IMR-90 (cell line): ENCODE measurements at regions of chr9 and their contacts with region 1.

Region 1: DNA sequence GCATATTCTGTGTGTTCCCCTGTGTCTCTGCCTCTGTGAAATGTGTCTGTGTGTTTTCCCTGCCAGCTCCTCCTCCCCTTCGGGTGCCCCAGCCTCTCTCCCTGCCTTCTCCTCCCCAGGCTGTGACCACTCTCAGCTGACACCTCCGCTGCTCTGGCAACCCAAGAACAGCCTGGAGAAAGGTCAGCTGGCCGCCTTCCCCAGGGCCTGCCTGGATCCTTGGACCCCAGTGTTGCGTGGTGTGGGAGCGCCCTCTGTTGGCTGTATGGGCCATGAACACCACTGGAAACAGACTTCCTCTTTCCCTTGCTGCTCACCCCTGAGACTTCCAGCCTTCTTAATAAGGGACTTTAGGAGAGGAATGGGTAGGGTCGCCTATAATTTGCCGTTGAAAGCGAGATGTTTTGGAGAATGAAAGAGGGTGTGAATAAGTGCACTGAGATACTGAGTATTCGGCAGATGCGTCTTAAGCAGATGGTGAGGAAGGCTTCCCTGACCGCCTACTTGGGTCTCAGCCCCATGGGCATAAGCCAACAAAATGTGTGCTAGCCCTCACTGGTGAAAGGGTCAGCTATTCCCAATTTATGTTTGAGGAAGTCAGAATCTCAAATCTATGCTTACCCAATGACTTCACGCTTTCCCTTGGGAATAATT is 114.9 kb upstream of the TRIM32 start:
- DNase-seq: peak; percentile 84
- ATAC-seq: peak; percentile 95
- H3K4me3 ChIP-seq: no peak overlapping the region
- H3K27ac ChIP-seq: no peak overlapping the region
- H3K4me1 ChIP-seq: peaks cover 5% of the 10 kb centered on the region; the same call in 1 of the 2 replicates
- H3K27me3 ChIP-seq: no peaks in the 10 kb centered on the region
- CTCF ChIP-seq: peak; percentile 94
- POLR2A ChIP-seq: peak; percentile 59; the same call in 1 of the 2 replicates
- RAD21 ChIP-seq: peak; percentile 99

Region 2: GRCh38 chr9:116365056-116365471 is 207.2 kb before region 1 on chr9:
- CTCF ChIA-PET with region 1: no interaction called
- POLR2A ChIA-PET with region 1: interaction called, 4 read pairs
- dilution Hi-C with region 1: no loop called
- in situ Hi-C with region 1: no loop called
- intact Hi-C with region 1: loop called (anchors 5 kb)
- DNase-seq: peak; percentile 78
- ATAC-seq: peak; percentile 84
- H3K4me3 ChIP-seq: no peak overlapping the region
- H3K27ac ChIP-seq: peak overlapping the region; percentile 9; the same call in 1 of the 2 replicates
- H3K4me1 ChIP-seq: peaks cover 10% of the 10 kb centered on the region
- H3K27me3 ChIP-seq: no peaks in the 10 kb centered on the region
- CTCF ChIP-seq: 0 out of 2 replicates have a peak, but pooled peaks have one; percentile 11
- POLR2A ChIP-seq: no peak
- RAD21 ChIP-seq: peak; percentile 28

Region 3: GRCh38 chr9:116377479-116377779 is 194.8 kb before region 1 on chr9:
- CTCF ChIA-PET with region 1: interaction called, 4 read pairs
- POLR2A ChIA-PET with region 1: no interaction called
- dilution Hi-C with region 1: no loop called
- in situ Hi-C with region 1: no loop called
- intact Hi-C with region 1: loop called (anchors 5 kb)
- DNase-seq: peak; percentile 75
- ATAC-seq: peak; percentile 86
- H3K4me3 ChIP-seq: no peak overlapping the region
- H3K27ac ChIP-seq: 0 out of 2 replicates have a peak overlapping the region, but pooled peaks have one; percentile 4
- H3K4me1 ChIP-seq: peaks cover 17% of the 10 kb centered on the region
- H3K27me3 ChIP-seq: no peaks in the 10 kb centered on the region
- CTCF ChIP-seq: no peak
- POLR2A ChIP-seq: no peak
- RAD21 ChIP-seq: no peak

Region 4: DNA sequence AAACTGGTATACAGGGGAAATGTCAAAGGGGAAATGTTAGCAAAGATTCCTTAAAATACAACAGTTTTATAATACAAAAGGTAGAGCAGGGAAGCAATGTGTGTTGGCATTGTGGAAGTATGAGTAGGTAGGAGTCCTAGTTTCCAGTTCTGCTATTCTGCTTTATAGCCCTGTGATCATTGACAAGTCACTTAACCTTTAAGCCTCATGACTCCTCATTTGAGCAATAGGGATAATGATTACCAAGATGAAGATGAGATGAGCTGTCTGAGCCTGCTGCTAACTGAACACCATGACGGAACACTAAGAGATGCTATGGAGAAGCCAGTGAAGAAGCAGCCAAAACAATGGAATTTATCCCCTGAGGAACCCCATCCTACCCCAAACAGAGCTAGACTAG is 166.9 kb before region 1 on chr9:
- CTCF ChIA-PET with region 1: no interaction called
- POLR2A ChIA-PET with region 1: no interaction called
- dilution Hi-C with region 1: no loop called
- in situ Hi-C with region 1: no loop called
- intact Hi-C with region 1: loop called (anchors 2 kb)
- DNase-seq: no peak
- ATAC-seq: no peak
- H3K4me3 ChIP-seq: no peak overlapping the region
- H3K27ac ChIP-seq: no peak overlapping the region
- H3K4me1 ChIP-seq: no peaks in the 10 kb centered on the region
- H3K27me3 ChIP-seq: no peaks in the 10 kb centered on the region; the same call in 1 of the 2 replicates
- CTCF ChIP-seq: no peak
- POLR2A ChIP-seq: no peak
- RAD21 ChIP-seq: no peak

Region 5: DNA sequence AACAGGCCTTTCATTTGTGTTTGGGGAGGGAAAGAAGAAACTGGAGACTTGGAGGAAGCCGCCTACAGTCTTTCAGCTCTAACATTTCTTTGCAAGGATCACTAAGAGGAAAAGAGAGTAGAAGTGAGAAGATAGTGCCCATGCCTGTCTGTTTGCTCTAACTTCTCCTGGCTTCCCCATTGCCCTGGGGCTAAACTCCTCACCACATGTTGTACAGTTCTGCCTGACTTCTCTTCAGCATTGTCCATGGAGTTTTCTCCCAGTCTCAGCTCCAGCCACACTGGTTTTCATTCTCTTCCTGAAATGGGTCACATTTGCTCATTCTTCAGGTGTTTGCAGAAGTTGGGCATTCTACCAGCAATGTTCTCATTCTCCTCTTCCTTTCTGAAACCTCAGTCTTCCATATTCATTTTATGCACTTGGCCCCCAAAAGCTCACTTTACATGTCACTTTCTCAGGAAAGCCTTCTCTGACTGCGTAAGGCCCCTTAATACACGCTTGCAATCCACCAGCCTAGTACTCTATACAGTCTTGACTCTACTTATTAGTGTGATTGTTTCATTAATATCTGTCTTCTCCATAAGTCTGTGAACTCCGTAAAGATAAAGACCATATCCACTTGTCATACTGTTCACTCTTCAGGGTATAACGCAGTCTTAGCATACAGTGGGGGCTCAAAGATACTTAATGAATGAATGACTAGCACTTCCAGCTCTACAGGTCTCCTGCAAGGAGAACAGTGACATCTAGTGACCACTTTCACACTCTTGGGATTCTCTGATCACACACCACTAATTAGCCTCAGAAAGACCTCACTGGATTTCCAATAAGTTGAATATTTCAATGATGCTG is 74.7 kb after region 1 on chr9:
- CTCF ChIA-PET with region 1: no interaction called
- POLR2A ChIA-PET with region 1: no interaction called
- dilution Hi-C with region 1: no loop called
- in situ Hi-C with region 1: no loop called
- intact Hi-C with region 1: loop called (anchors 2 kb)
- DNase-seq: peak; percentile 61
- ATAC-seq: peak; percentile 80
- H3K4me3 ChIP-seq: no peak overlapping the region
- H3K27ac ChIP-seq: no peak overlapping the region
- H3K4me1 ChIP-seq: peaks cover 4% of the 10 kb centered on the region
- H3K27me3 ChIP-seq: no peaks in the 10 kb centered on the region
- CTCF ChIP-seq: peak; percentile 72
- POLR2A ChIP-seq: no peak
- RAD21 ChIP-seq: peak; percentile 79